Panc1 (cell line): ENCODE measurements at regions of chr9 and their contacts with region 1.

Region 1: GRCh38 chr9:16133556-16134227 is 580.8 kb downstream of the CCDC171 start:
- DNase-seq: no peak
- ATAC-seq: no peak
- H3K4me3 ChIP-seq: no peak overlapping the region
- H3K27ac ChIP-seq: no peak overlapping the region
- H3K4me1 ChIP-seq: no peaks in the 10 kb centered on the region
- H3K27me3 ChIP-seq: no peaks in the 10 kb centered on the region
- CTCF ChIP-seq: peak; percentile 60

Region 2: DNA sequence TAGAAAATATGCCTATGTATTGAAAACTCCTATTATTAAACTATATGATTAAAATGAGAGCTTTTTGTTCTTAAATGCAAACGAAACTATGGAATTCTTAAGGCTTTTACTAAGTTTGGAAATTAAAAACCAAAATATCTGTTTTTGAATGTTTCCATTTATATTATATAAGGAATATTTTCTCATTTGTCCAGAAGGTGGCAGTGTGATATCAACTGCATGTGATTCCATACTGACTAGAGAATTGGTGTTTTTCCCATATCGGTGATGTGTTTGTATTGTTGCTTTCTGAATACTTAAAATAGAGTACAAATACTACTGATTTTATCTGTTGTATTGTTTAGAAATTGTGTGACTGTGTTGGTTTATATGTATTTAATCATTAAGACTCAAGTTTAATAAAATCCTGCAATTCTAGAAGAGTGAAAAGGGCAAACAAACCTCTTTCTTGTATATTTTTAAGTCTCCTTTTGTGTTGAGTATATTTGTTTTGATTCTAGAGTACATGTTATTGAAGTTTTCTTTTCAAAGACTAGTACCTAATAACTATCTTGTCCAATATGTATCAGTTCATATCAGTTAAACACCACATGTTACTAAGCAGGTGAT is 260.0 kb before region 1 on chr9:
- CTCF ChIA-PET with region 1: no interaction called
- POLR2A ChIA-PET with region 1: no interaction called
- in situ Hi-C with region 1: no loop called
- intact Hi-C with region 1: loop called (anchors 5 kb)
- DNase-seq: peak; percentile 5
- ATAC-seq: no peak
- H3K4me3 ChIP-seq: no peak overlapping the region
- H3K27ac ChIP-seq: no peak overlapping the region
- H3K4me1 ChIP-seq: no peaks in the 10 kb centered on the region
- H3K27me3 ChIP-seq: no peaks in the 10 kb centered on the region
- CTCF ChIP-seq: peak; percentile 25; the same call in 1 of the 2 replicates

Region 3: GRCh38 chr9:15982182-15982581 is 151.5 kb before region 1 on chr9:
- CTCF ChIA-PET with region 1: no interaction called
- POLR2A ChIA-PET with region 1: no interaction called
- in situ Hi-C with region 1: no loop called
- intact Hi-C with region 1: no loop called
- DNase-seq: no peak
- ATAC-seq: no peak
- H3K4me3 ChIP-seq: no peak overlapping the region
- H3K27ac ChIP-seq: no peak overlapping the region
- H3K4me1 ChIP-seq: no peaks in the 10 kb centered on the region
- H3K27me3 ChIP-seq: no peaks in the 10 kb centered on the region
- CTCF ChIP-seq: no peak